ENCODE measurements at regions of chr1 and their contacts with region 1.

Region 1: GRCh38 chr1:22451702-22452474 is at the start of gene ZBTB40:
- DNase-seq: peak; percentile 96
- ATAC-seq: peak; percentile 88
- H3K4me3 ChIP-seq: peak within 1 kb of the TSS; percentile 63 to 92 (median 72)
- H3K4me3 Mint-ChIP-seq: peak within 1 kb of the TSS; percentile 95
- H3K27ac ChIP-seq: peak within 1 kb of the TSS; percentile 73 to 93
- H3K27ac Mint-ChIP-seq: peak within 1 kb of the TSS; percentile 96
- H3K4me1 ChIP-seq: peaks cover 14 to 17% of the 10 kb centered on the region in 2 donors
- H3K4me1 Mint-ChIP-seq: peaks cover 37% of the 10 kb centered on the region
- H3K27me3 ChIP-seq: no peaks in the 10 kb centered on the region
- H3K27me3 Mint-ChIP-seq: no peaks in the 10 kb centered on the region
- CTCF ChIP-seq: no peak
- total RNA-seq, gene ZBTB40: 51.9 and 56.3 TPM in 2 replicates

Region 2: GRCh38 chr1:22431965-22432364 is 19.9 kb before region 1 on chr1:
- CTCF ChIA-PET with region 1: no interaction called
- POLR2A ChIA-PET with region 1: no interaction called
- intact Hi-C with region 1: loop called (anchors 1 kb)
- DNase-seq: no peak
- ATAC-seq: no peak
- H3K4me3 ChIP-seq: no peak overlapping the region
- H3K4me3 Mint-ChIP-seq: no peak overlapping the region
- H3K27ac ChIP-seq: no peak overlapping the region
- H3K27ac Mint-ChIP-seq: no peak overlapping the region
- H3K4me1 ChIP-seq: peaks cover 0 to 5% of the 10 kb centered on the region in 2 donors
- H3K4me1 Mint-ChIP-seq: peaks cover 8% of the 10 kb centered on the region
- H3K27me3 ChIP-seq: no peaks in the 10 kb centered on the region
- H3K27me3 Mint-ChIP-seq: peaks cover 9% of the 10 kb centered on the region
- CTCF ChIP-seq: no peak

Region 3: GRCh38 chr1:22575532-22576149 is 123.8 kb after region 1 on chr1:
- CTCF ChIA-PET with region 1: no interaction called
- POLR2A ChIA-PET with region 1: no interaction called
- intact Hi-C with region 1: no loop called
- DNase-seq: no peak
- ATAC-seq: no peak
- H3K4me3 ChIP-seq: no peak overlapping the region
- H3K4me3 Mint-ChIP-seq: no peak overlapping the region
- H3K27ac ChIP-seq: no peak overlapping the region
- H3K27ac Mint-ChIP-seq: no peak overlapping the region
- H3K4me1 ChIP-seq: no peaks in the 10 kb centered on the region
- H3K4me1 Mint-ChIP-seq: no peaks in the 10 kb centered on the region
- H3K27me3 ChIP-seq: no peaks in the 10 kb centered on the region
- H3K27me3 Mint-ChIP-seq: peaks cover 6% of the 10 kb centered on the region
- CTCF ChIP-seq: no peak

Measured in B cell (primary cell).